ENCODE measurements at regions of chr6 and their contacts with region 1.

Region 1: DNA sequence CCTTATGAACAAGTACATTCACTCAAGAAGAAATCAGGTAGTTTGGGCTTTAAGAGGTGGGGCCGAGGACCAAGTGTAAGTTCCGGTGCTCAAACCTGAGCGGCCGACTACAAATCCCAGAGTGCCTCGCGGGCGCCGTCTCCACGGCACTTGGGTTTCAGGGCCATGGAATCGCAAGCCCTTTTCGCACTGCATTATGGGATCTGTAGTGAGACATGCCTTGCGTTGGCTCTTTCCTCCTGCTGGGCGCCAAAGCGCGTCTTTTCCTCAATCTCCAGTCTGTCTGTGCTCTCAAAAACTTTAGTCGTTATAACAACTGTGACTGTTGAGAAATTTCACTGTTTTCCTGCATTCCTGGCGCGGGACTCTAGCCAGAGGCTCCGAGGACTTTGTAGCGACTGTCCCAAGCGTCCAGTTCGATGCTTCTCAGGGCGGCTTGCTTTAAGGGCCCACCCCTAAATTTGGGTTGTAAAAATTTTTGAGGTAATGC is 433 bp upstream of the FBXO9 start:
- DNase-seq: peak; percentile 97
- H3K4me3 ChIP-seq: peak overlapping the region; percentile 85 to 95 (median 88)
- H3K27ac ChIP-seq: peak overlapping the region; percentile 45
- H3K4me1 ChIP-seq: peaks cover 11% of the 10 kb centered on the region
- H3K27me3 ChIP-seq: no peaks in the 10 kb centered on the region
- CTCF ChIP-seq: no peak

Region 2: DNA sequence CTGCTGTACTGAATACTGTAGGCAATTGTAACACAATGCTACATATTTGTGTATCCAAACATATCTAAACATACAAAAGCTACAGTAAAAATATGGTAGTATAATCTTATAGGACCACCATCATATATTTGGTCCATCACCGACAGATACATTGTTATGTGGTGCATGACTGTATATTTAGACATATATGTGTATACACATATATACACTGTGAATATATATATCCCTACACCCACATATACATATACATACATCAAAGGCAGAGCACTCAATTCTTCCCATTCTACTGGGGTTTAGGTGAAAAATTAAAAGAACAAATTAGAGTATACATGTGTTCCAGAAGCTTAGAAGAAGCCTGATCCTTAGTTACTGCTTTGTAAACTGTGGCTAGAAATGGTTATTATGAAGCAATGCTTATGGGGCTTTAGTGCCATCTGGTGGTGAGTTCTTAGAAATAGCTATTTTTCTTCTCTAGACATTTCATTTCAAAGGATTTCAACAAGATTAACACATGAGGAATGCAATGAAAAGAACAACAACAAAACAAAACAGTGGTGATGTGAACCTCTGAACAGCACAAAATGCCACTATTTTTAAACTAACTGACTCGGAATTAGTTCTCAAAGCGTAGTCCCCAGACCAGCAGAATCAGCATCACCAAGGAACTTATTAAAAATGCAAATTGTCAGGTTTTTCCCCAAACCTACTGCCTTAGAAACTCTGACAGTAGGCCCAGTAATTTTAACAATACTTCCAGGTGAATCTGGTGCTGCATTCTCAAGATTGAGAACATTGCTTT is 1015.3 kb before region 1 on chr6:
- CTCF ChIA-PET with region 1: interaction called, 10 read pairs
- dilution Hi-C with region 1: no loop called
- in situ Hi-C with region 1: no loop called
- intact Hi-C with region 1: no loop called
- DNase-seq: peak; percentile 13
- H3K4me3 ChIP-seq: no peak overlapping the region
- H3K27ac ChIP-seq: no peak overlapping the region
- H3K4me1 ChIP-seq: no peaks in the 10 kb centered on the region
- H3K27me3 ChIP-seq: no peaks in the 10 kb centered on the region
- CTCF ChIP-seq: peak; percentile 73 to 79

Region 3: GRCh38 chr6:52839119-52840055 is 225.4 kb before region 1 on chr6:
- CTCF ChIA-PET with region 1: no interaction called
- dilution Hi-C with region 1: no loop called
- in situ Hi-C with region 1: no loop called
- intact Hi-C with region 1: loop called (anchors 1 kb)
- DNase-seq: peak; percentile 58
- H3K4me3 ChIP-seq: no peak overlapping the region
- H3K27ac ChIP-seq: no peak overlapping the region
- H3K4me1 ChIP-seq: no peaks in the 10 kb centered on the region
- H3K27me3 ChIP-seq: no peaks in the 10 kb centered on the region
- CTCF ChIP-seq: peak; percentile 57 to 64

Region 4: DNA sequence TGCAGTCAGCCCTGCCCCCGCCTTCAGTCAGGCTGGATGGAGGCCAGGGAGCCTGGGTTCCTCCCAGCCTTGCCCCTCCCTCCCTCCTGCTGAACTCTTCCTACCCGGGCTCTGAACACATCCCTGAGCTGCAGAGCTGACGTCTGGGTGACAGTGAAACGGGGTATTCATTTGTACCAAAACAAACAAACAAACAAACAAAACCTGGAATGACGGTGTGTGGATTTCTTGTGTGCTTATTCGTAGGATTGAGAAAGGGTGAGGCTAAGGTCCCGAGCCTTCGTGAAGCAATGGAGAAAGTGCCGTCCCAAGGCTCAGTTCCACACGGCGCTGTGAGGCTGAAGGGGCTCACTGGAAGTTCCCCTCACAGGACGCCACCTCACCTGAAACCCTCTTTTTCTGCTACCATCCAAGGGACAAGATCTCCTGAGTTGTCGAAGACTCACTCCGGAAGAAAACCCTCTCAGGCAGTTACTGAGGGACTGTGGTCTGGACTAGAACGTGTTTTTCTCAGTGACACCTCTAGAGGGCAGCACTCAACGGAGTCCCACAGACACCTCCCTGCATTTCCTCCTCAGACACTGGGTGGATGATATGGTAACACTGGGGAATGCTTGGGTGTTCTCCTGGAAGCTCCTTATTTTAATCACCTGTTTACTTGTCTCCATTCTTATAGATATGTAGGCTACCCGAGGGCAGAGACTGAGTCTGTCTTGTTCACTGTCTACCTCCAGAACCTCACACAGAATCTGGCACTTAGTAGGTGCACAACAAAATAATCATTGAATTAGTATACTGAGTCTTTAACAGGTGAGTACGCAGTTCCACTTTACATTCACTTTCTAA is 182.6 kb before region 1 on chr6:
- CTCF ChIA-PET with region 1: no interaction called
- dilution Hi-C with region 1: no loop called
- in situ Hi-C with region 1: loop called in 1 of 2 experiments (anchors 10 kb)
- intact Hi-C with region 1: no loop called
- DNase-seq: peak; percentile 70
- H3K4me3 ChIP-seq: peak overlapping the region; percentile 39 to 57 (median 49)
- H3K27ac ChIP-seq: no peak overlapping the region
- H3K4me1 ChIP-seq: peaks cover 5% of the 10 kb centered on the region
- H3K27me3 ChIP-seq: peaks cover 13% of the 10 kb centered on the region
- CTCF ChIP-seq: peak; percentile 71 to 86

Region 5: DNA sequence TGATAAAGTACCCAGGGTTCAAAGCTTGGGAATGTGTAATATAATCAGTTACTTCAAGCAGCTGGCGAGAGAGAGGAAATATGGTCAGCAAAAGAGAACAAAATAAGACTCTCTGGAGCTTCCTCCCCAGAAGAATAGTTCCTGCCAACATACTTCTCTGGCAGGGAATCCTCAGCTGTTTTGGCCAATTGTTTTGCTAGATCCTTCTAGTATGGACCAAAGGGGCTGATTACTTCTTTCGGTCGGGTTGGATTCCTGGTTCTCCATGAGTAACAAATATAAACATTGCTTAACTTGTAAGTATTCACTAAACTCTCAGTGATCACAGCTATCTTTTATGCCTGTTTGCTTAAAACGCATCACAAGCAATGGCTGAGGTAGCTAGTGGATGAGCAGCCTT is 31.0 kb before region 1 on chr6:
- CTCF ChIA-PET with region 1: no interaction called
- dilution Hi-C with region 1: no loop called
- in situ Hi-C with region 1: no loop called
- intact Hi-C with region 1: no loop called
- DNase-seq: no peak
- H3K4me3 ChIP-seq: no peak overlapping the region
- H3K27ac ChIP-seq: no peak overlapping the region
- H3K4me1 ChIP-seq: no peaks in the 10 kb centered on the region
- H3K27me3 ChIP-seq: no peaks in the 10 kb centered on the region
- CTCF ChIP-seq: no peak